Ascending aorta (tissue), 2 donors: ENCODE measurements at regions of chr22 and their contacts with region 1.

Region 1: DNA sequence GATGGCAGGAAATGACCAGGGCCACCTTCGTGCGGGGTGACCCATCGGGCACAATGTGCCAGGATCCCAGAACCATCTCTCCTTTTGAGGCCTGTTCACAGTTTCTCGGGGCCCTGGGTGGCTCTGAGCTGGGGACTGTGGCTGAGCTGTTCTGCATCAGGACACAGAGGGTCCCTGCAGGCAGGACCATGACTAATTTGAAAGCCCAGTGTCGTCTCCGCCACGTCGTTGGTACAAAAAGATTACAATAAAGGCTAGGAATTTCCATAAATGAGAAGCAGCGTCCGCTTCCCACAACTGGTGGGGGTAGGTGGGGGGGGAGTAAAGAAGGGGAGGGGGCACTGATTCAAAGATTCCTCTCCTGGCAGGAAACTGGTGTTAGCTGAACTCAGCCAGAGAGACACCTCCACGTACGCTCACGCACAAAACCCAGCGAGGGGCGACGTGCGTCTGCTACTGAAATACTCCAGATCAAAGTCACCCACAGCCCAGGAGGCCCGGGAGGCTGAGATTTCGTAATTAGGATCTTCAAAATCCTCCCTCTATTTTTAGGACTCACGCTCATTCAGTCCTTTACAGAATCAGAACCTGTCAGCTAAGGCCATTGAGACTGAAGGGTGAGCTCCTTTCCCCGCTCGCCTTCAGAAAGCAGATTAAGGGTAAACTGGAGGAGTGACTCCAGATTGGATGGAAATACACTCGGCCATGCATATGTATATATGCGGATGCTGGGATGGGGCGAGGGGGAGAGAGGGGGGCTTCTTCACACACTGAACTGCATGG is 11.0 kb downstream of the MN1 start:
- DNase-seq: no peak
- H3K4me3 ChIP-seq: peak overlapping the region; percentile 28 to 77
- H3K27ac ChIP-seq: peak overlapping the region; percentile 92 to 96
- H3K4me1 ChIP-seq: peaks cover 7 to 53% of the 10 kb centered on the region in 2 donors
- H3K27me3 ChIP-seq: no peaks in the 10 kb centered on the region
- CTCF ChIP-seq: no peak

Region 2: GRCh38 chr22:27686534-27686933 is 104.0 kb before region 1 on chr22:
- intact Hi-C with region 1: loop called (anchors 5 kb)
- DNase-seq: peak; percentile 76 to 95
- H3K4me3 ChIP-seq: no peak overlapping the region
- H3K27ac ChIP-seq: peak overlapping the region; percentile 84 to 87
- H3K4me1 ChIP-seq: peaks cover 10 to 18% of the 10 kb centered on the region in 2 donors
- H3K27me3 ChIP-seq: no peaks in the 10 kb centered on the region
- CTCF ChIP-seq: no peak

Region 3: DNA sequence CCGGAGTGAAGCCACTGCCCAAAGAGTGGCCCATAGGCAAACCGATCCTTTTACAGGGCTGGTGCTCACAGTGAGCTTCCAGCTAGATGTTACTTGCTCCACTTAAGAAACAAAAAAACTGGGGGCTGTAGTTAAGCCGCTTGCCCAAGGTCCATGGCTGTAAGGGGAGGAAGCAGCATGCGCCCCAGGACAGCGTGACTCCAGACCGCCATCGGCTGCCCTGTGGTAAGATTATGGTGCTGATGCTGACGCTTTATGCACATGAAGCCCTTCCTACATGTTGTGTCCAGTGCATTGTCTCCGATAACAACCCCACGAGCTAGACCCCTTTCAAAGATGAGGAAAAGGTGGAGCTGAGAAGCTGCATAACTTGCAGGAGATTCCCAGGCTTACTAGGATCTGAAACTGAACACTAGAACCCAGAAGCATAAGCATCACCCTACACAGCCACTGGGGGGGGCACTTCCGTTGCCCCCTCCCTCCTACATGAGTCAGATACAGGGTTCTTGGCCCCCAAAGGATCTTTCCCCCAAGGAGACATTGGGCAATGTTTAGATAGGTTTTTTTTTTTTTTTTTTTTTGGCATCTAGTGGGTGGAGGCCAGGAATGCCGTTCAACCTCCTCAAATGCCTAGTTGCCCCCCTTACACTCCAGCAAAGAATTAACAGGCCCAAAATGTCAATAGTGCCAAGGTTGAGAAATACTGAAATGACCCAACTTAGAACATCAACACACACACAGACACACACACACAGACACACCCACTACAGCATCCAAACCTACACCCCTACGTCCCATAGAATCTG is 43.0 kb before region 1 on chr22:
- intact Hi-C with region 1: loop called (anchors 2 kb)
- DNase-seq: peak in 1 of 2 donors; percentile 82
- H3K4me3 ChIP-seq: no peak overlapping the region
- H3K27ac ChIP-seq: peak overlapping the region; percentile 86 to 88
- H3K4me1 ChIP-seq: peaks cover 18 to 32% of the 10 kb centered on the region in 2 donors
- H3K27me3 ChIP-seq: no peaks in the 10 kb centered on the region
- CTCF ChIP-seq: peak in 2 of 3 experiments; percentile 47 to 52

Region 4: GRCh38 chr22:27775758-27776649 is 14.6 kb before region 1 on chr22:
- intact Hi-C with region 1: loop called (anchors 2 kb)
- DNase-seq: no peak
- H3K4me3 ChIP-seq: peak overlapping the region; percentile 35 to 51
- H3K27ac ChIP-seq: peak overlapping the region; percentile 92 to 96
- H3K4me1 ChIP-seq: peaks cover 14 to 47% of the 10 kb centered on the region in 2 donors
- H3K27me3 ChIP-seq: no peaks in the 10 kb centered on the region
- CTCF ChIP-seq: no peak